H1 (cell line): ENCODE measurements at regions of chr15 and their contacts with region 1.

Region 1: GRCh38 chr15:68154923-68155559 is 50.1 kb downstream of the CALML4 start:
- DNase-seq: peak in 1 of 2 experiments; percentile 5
- H3K4me3 ChIP-seq: no peak overlapping the region
- H3K27ac ChIP-seq: no peak overlapping the region
- H3K4me1 ChIP-seq: no peaks in the 10 kb centered on the region
- H3K27me3 ChIP-seq: no peaks in the 10 kb centered on the region
- CTCF ChIP-seq: peak in 2 of 3 experiments; percentile 69 to 75; a peak in 3 of 4 replicates
- EP300 ChIP-seq: no peak
- POLR2A ChIP-seq: no peak
- RAD21 ChIP-seq: peak; percentile 91 to 92

Region 2: DNA sequence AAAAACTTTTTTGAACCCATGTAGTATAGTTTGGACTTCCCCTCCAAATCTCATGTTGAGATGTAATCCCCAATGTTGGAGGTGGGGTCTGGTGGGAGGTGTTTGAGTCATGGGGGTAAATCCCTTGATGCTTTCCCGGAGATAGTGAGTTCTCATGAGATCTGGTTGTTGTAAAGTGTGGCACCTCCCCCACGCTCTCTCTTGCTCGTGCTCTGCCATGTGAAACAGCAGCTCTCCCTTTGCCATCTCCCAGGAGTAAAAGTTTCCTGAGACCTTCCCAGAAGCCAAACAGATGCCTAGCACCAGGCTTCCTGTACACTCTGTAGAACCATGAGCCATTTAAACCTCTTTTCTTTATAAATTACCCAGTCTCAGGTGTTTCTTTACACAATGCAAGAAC is 299.2 kb before region 1 on chr15:
- CTCF ChIA-PET with region 1: interaction called, 20 read pairs
- POLR2A ChIA-PET with region 1: no interaction called
- DNase-seq: no peak
- H3K4me3 ChIP-seq: no peak overlapping the region
- H3K27ac ChIP-seq: no peak overlapping the region
- H3K4me1 ChIP-seq: peaks cover 6 to 16% (median 9%) of the 10 kb centered on the region in 4 experiments; a peak in 5 of 7 replicates
- H3K27me3 ChIP-seq: peaks cover 0 to 2% (median 0%) of the 10 kb centered on the region in 4 experiments; a peak in 1 of 7 replicates
- CTCF ChIP-seq: no peak
- EP300 ChIP-seq: no peak
- POLR2A ChIP-seq: no peak
- RAD21 ChIP-seq: no peak

Region 3: GRCh38 chr15:67863442-67863987 is 291.5 kb before region 1 on chr15:
- CTCF ChIA-PET with region 1: interaction called, 33 read pairs
- POLR2A ChIA-PET with region 1: interaction called, 5 read pairs
- DNase-seq: peak in 1 of 2 experiments; percentile 86
- H3K4me3 ChIP-seq: peak overlapping the region; percentile 12 to 54 (median 46); a peak in 5 of 8 replicates
- H3K27ac ChIP-seq: no peak overlapping the region
- H3K4me1 ChIP-seq: peaks cover 0 to 15% (median 5%) of the 10 kb centered on the region in 4 experiments; a peak in 5 of 7 replicates
- H3K27me3 ChIP-seq: peaks cover 0 to 4% (median 1%) of the 10 kb centered on the region in 4 experiments; a peak in 3 of 7 replicates
- CTCF ChIP-seq: peak; percentile 83 to 91 (median 84)
- EP300 ChIP-seq: no peak
- POLR2A ChIP-seq: no peak
- RAD21 ChIP-seq: peak; percentile 95 to 97